Left ventricle myocardium inferior (tissue), 1 donor: ENCODE measurements at regions of chrX and their contacts with region 1.

Region 1: DNA sequence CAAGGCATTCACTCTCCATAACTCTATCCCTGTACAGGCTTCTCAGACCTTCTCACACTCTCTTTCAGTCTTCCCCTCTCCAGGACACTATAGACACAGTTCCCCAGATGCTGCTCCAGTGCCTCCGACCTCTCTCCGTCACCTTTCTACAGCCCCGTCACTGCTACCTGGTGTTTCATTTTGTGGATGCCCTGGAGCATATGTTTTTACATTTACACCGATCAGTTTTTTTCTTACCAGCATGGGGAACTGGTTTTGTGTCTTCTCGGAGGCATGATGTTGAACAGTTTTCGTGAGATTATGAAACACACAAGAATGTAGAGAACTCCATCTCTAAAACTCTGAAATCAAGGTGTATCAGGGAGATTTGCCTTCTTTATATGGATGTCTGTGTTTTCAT is 2.0 kb upstream of the RAB40AL start:
- DNase-seq: no peak
- H3K4me3 ChIP-seq: no peak overlapping the region
- H3K27ac ChIP-seq: no peak overlapping the region
- H3K4me1 ChIP-seq: no peaks in the 10 kb centered on the region
- H3K27me3 ChIP-seq: no peaks in the 10 kb centered on the region
- CTCF ChIP-seq: no peak

Region 2: DNA sequence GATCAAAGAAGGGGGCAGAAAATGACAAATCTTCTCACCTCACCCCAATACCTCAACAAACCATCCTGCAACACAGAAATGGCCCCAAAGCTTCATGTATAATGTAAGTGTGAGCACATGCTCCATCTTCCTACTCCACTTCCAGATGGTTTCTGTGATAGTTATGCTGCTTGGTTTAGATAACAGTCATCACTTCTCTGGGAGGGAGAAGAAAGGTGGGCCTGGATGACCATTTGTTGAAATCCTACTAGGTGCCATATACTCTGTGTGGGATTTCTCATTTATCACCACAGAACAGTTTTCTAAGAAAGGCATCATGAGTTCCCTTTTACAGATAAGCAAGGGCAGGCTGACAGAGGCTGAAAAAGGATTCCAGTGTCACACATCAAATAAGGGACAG is 189.2 kb after region 1 on chrX:
- intact Hi-C with region 1: no loop called
- DNase-seq: no peak
- H3K4me3 ChIP-seq: no peak overlapping the region
- H3K27ac ChIP-seq: no peak overlapping the region
- H3K4me1 ChIP-seq: no peaks in the 10 kb centered on the region
- H3K27me3 ChIP-seq: no peaks in the 10 kb centered on the region
- CTCF ChIP-seq: no peak

Region 3: DNA sequence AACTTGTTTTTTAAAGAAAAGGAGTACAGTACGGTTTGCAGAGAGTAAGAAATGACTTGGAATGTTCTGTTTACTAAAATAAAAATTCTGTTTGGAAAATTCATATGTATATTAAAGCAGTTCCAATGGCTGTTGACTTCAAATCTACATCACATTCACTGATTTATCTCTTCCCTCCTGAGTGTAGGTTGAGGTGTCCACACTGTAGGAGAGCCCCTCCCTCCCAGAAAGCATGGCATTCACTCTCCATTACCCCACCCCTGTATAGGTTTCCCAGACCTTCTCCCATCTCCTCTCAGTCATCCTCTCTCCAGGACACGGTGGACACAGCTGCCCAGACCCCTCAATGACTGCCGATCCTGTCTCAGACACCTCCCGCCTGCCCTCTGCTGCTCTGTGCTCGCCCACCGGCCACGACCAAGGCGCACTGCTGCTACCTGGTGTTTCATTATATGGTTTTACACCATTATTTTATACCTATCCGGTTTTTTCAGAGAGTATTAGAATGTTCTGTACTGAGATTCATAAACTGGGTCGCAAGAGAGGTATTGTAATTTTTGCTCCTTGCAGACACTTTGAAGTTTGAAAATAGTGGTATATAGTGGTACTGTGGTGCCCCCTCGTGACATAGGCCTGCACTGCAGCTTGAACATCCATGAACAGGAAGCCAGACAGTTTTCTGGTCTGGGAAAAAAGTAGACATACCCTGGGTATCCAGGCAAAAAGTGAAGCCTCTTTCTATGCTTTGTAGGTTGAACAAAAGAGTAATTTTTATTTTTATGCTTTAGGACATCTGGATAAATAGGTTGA is 241.1 kb after region 1 on chrX:
- intact Hi-C with region 1: loop called (anchors 5 kb)
- DNase-seq: peak; percentile 36
- H3K4me3 ChIP-seq: peak overlapping the region; percentile 33
- H3K27ac ChIP-seq: no peak overlapping the region
- H3K4me1 ChIP-seq: no peaks in the 10 kb centered on the region
- H3K27me3 ChIP-seq: no peaks in the 10 kb centered on the region
- CTCF ChIP-seq: peak; percentile 72

Region 4: DNA sequence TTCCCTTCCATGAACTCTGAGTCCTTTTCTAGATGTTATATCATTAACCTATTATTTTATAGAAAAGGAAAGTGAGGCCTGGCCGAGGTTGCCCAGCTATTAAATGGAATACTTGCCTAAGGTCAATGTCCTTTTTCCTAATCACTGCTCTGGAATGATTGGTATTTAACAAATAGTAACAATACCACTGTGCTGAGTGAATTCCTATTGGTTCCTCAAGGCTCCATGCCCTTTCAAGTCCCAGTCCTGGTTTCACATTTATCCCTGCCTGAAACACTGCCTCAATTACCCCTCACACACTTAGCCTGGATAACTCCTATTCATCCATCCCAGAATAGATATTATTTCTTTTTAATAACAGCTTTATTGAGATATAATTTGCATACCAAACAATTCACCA is 427.4 kb after region 1 on chrX:
- intact Hi-C with region 1: no loop called
- DNase-seq: no peak
- H3K4me3 ChIP-seq: no peak overlapping the region
- H3K27ac ChIP-seq: no peak overlapping the region
- H3K4me1 ChIP-seq: peaks cover 4% of the 10 kb centered on the region
- H3K27me3 ChIP-seq: no peaks in the 10 kb centered on the region
- CTCF ChIP-seq: no peak